ENCODE measurements at regions of chr6 and their contacts with region 1.

Region 1: DNA sequence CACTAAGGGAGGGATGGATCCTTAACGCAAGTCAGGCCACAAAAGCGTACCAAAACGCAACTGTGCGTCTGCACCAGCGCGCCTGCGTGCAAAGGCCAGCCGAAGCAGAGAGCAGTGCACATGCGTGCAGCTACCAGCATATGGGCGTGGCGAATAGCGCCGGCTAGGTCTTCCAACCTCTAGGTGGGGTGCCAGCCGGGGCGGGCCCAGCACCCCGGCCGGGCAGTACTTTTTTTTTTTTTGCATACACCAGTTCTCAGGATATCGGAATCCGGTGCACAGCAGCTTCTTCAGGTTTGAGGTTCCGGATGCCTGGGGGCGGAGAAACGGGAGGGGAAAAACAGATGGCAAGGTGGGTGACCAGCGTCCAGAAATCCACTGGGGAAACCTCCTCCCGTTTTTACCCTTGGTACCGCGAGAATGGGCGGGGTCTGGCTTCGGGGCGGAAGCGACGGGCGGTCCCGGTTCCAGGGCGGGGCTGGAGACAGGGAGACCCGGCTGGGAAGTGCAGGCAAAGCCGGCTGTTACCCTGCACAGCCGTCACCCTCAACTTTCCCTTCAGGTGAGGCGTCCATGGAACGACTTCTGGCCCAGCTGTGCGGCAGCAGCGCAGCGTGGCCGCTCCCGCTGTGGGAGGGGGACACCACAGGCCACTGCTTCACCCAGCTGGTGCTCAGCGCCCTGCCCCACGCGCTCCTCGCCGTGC is at the start of gene ABCC10:
- DNase-seq: peak; percentile 97
- H3K4me3 Mint-ChIP-seq: peak within 1 kb of the TSS; percentile 87
- H3K27ac Mint-ChIP-seq: peak within 1 kb of the TSS; percentile 86
- H3K4me1 Mint-ChIP-seq: peaks cover 21% of the 10 kb centered on the region
- H3K27me3 Mint-ChIP-seq: no peaks in the 10 kb centered on the region
- total RNA-seq, gene ABCC10: 22.7 to 26.6 TPM

Region 2: GRCh38 chr6:42984001-42984923 is 443.3 kb before region 1 on chr6 and contains the start of gene PPP2R5D:
- CTCF ChIA-PET with region 1: no interaction called
- intact Hi-C with region 1: loop called (anchors 2 kb)
- DNase-seq: peak; percentile 99
- H3K4me3 Mint-ChIP-seq: peak within 1 kb of the TSS; percentile 93
- H3K27ac Mint-ChIP-seq: peak within 1 kb of the TSS; percentile 81
- H3K4me1 Mint-ChIP-seq: peaks cover 51% of the 10 kb centered on the region
- H3K27me3 Mint-ChIP-seq: no peaks in the 10 kb centered on the region
- total RNA-seq, gene PPP2R5D: 52.4 to 54.4 TPM

Region 3: DNA sequence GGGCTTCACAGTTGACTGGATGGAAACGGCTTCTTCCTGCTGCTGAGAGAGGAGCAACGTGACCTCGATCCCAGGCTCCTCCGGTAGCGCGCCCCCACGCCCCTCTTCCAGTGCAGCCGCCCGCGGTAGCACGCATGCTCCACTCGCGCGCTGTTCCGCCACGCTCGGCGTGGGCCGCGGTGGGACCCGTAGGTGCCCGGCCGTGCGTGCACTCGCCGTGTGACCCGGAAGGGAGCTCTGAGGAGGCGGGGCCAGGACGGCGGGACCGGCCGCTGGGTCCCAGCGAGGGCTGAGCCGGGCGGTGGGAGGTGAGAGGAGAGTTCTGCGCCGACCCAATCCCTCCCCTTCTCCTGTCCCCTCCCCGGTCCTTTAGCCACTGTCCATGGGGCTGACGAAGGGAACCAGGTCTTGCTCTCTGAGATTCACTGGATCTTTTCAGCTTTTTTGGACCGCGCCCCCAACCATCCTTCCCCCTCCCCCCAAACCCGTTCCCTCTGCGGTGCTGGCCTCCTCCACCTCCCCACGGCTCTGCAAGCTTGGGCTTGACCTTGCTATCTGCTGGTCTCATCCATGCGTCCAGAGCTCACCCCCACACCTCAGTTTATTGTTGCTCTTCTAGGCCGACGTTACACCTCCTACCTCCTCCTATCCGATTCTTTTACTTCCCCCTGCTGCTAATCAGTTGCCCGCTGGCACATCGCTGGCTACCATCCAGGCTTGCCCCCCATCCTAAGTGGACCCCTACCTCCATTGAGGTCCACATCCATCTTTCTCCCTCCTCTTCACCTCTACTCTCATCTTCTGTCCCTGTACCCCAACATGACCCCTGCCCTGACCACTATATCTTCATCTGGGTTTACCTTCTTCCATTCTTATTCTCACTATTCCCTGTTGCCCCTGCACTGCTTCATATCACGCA is 245.4 kb before region 1 on chr6 and contains the start of gene CUL9:
- CTCF ChIA-PET with region 1: no interaction called
- intact Hi-C with region 1: no loop called
- DNase-seq: peak; percentile 85
- H3K4me3 Mint-ChIP-seq: peak within 1 kb of the TSS; percentile 95
- H3K27ac Mint-ChIP-seq: peak within 1 kb of the TSS; percentile 84
- H3K4me1 Mint-ChIP-seq: peaks cover 47% of the 10 kb centered on the region
- H3K27me3 Mint-ChIP-seq: no peaks in the 10 kb centered on the region
- total RNA-seq, gene CUL9: 43.1 to 49.3 TPM

Region 4: GRCh38 chr6:43308101-43308989 is 119.2 kb before region 1 on chr6 and contains the start of gene CRIP3:
- CTCF ChIA-PET with region 1: no interaction called
- intact Hi-C with region 1: loop called (anchors 1 kb)
- DNase-seq: peak; percentile 67
- H3K4me3 Mint-ChIP-seq: peak within 1 kb of the TSS; percentile 82
- H3K27ac Mint-ChIP-seq: no peak within 1 kb of the TSS
- H3K4me1 Mint-ChIP-seq: peaks cover 6% of the 10 kb centered on the region
- H3K27me3 Mint-ChIP-seq: peaks cover 2% of the 10 kb centered on the region
- total RNA-seq, gene CRIP3: 2.9 to 3.1 TPM

Region 5: GRCh38 chr6:43386492-43386891 is 41.1 kb before region 1 on chr6:
- CTCF ChIA-PET with region 1: interaction called, 3 read pairs
- intact Hi-C with region 1: loop called (anchors 1 kb)
- DNase-seq: no peak
- H3K4me3 Mint-ChIP-seq: no peak overlapping the region
- H3K27ac Mint-ChIP-seq: no peak overlapping the region
- H3K4me1 Mint-ChIP-seq: peaks cover 50% of the 10 kb centered on the region
- H3K27me3 Mint-ChIP-seq: peaks cover 3% of the 10 kb centered on the region

Region 6: DNA sequence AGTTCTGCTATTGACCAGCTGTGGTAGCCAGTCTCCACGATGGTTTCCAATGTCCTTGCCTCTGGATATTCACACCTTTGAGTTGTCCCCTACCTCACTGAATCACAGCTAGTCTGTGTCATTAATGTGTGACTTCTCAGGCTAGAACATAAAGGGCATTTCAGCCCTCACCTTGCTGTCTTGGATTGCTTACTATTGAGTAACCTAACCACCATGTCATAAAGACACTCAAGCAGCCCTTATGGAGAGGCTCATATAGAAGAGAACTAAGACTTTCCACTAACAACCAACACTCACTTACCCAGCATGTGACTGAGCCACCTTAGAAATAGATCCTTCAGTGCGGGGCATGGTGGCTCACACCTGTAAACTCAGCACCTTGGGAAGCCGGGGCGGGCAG is 19.3 kb before region 1 on chr6:
- CTCF ChIA-PET with region 1: no interaction called
- intact Hi-C with region 1: no loop called
- DNase-seq: no peak
- H3K4me3 Mint-ChIP-seq: no peak overlapping the region
- H3K27ac Mint-ChIP-seq: no peak overlapping the region
- H3K4me1 Mint-ChIP-seq: no peaks in the 10 kb centered on the region
- H3K27me3 Mint-ChIP-seq: peaks cover 2% of the 10 kb centered on the region

Region 7: DNA sequence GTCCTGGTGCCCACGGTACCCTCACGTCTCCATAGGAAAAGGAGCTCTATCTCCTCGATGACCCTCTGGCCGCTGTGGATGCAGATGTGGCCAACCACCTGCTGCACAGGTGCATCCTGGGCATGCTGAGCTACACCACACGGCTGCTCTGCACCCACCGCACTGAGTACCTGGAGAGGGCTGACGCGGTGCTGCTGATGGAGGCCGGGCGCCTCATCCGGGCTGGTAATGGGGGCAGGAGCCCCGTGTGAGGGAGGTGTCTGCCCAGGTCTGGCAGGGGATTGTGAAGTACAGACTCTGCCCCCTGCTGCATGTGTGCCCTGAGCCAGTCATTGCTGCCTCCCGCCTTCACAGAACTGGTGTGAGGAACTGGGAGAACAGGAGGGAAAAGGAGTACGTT is 15.4 kb after region 1 on chr6:
- CTCF ChIA-PET with region 1: no interaction called
- intact Hi-C with region 1: no loop called
- DNase-seq: no peak
- H3K4me3 Mint-ChIP-seq: no peak overlapping the region
- H3K27ac Mint-ChIP-seq: no peak overlapping the region
- H3K4me1 Mint-ChIP-seq: no peaks in the 10 kb centered on the region
- H3K27me3 Mint-ChIP-seq: no peaks in the 10 kb centered on the region

Region 8: DNA sequence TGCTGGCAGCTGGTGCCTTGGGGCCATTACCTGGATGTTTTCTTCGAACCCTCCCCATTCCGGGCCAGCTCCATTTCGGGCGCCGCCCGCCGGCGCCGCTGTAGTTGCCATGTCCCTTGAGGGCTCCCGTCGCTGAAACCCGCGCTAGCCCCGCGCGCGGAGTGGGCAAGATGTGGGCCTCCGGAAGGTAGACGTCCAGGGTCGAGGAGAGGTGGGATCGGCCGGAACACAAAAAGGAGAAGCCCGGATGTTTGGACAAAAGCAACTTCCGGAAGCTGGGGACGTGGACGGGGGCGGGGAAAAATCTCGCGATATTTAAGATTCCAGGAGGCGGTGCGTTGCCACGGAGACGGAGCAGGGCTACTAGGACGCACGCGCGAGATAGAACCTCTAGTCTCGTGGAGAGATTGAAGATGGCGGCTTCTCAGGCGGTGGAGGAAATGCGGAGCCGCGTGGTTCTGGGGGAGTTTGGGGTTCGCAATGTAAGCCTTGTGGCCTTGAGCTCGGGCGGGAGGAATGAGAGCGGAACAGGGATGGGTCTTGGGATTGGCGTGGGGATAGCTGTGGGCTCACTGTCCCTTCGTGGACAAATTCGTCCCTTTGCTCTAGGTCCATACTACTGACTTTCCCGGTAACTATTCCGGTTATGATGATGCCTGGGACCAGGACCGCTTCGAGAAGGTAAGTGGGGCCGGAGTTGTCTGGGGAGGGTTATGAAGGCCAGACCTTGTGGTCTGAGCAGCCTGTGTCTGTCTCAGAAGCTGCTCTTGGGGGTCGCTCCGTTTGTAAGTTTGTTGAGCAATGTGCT is 89.3 kb after region 1 on chr6 and contains the starts of genes POLR1C and YIPF3:
- CTCF ChIA-PET with region 1: no interaction called
- intact Hi-C with region 1: loop called (anchors 2 kb)
- DNase-seq: peak; percentile 99
- H3K4me3 Mint-ChIP-seq: no peak within 1 kb of the TSS
- H3K27ac Mint-ChIP-seq: no peak within 1 kb of the TSS
- H3K4me1 Mint-ChIP-seq: peaks cover 28% of the 10 kb centered on the region
- H3K27me3 Mint-ChIP-seq: no peaks in the 10 kb centered on the region
- total RNA-seq, gene POLR1C: 47.5 to 50.1 TPM
- total RNA-seq, gene YIPF3: 26.2 to 26.5 TPM

Region 9: DNA sequence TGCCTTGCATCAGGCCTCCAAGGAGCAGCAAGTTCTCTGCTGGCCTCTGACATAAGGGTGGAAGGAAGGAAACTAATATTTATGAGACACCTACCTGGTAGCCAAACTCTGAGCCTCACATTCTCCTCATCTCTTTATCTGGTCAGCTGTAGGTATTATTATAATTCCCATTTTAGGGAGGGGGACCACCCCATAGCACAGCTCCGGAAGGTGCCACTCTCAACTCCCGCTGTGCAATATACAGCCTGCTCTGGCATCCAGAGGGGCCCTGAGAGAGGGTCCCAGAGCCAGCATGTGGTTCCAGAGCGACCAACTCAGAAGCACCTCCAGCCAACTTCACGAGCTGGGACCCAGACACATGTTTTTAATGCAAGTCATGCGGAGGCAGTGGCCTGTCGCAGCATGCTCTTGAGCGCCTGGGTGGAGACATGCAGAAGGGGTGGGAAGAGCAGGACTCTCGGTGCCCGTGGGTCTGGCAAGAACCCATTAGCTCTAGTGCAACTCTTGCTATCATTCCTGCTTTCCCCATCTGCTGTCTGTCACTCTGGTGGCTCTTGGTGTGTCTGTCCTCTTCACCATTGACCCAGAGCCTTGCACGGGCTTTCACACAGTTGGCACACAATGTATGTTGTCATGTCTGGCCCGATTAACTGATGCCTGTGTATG is 774.2 kb after region 1 on chr6:
- CTCF ChIA-PET with region 1: no interaction called
- intact Hi-C with region 1: no loop called
- DNase-seq: no peak
- H3K4me3 Mint-ChIP-seq: no peak overlapping the region
- H3K27ac Mint-ChIP-seq: no peak overlapping the region
- H3K4me1 Mint-ChIP-seq: no peaks in the 10 kb centered on the region
- H3K27me3 Mint-ChIP-seq: no peaks in the 10 kb centered on the region

Measured in activated naive CD4-positive, alpha-beta T cell treated with anti-CD3 and anti-CD28 coated beads for 36 hours (primary cell).